Sigmoid colon (tissue), 7 donors: ENCODE measurements at regions of chr3 and their contacts with region 1.

Region 1: DNA sequence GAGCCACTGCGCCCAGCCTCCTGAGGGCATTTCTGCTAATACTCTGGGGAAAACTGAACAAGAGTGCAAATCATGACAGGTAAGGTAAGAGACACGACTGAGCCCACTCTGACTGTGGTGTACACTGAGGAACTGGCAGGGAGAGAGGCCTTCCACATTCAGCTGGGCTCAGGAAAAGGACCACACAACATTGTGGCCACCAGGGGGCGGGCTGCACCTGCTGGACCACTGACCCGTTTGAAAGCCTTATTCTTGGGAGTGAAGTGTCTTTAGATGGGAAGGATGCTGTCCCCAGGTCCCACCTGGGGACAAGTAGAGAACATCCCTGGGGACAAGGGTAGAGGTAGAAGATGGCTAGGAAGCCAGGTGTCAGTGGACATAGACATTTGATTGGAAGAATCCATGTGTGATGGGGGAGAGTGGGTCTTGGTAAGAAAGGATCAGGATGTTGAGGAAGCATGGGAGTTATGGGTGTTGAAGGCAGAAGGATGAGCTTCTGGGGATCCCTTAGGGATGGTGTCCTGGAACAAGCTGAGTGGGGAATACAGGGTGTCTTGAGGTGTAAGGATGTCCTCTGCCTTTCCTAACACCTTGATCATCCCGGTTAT is 6.2 kb upstream of the CTDSPL start:
- DNase-seq: peak; percentile 92
- H3K4me3 ChIP-seq: no peak overlapping the region
- H3K27ac ChIP-seq: peak overlapping the region in 1 of 4 donors; percentile 36
- H3K4me1 ChIP-seq: peaks cover 0 to 25% (median 15%) of the 10 kb centered on the region in 4 donors
- H3K27me3 ChIP-seq: no peaks in the 10 kb centered on the region
- CTCF ChIP-seq: peak; percentile 92 to 96 (median 94)
- EP300 ChIP-seq: no peak
- POLR2A ChIP-seq: no peak

Region 2: DNA sequence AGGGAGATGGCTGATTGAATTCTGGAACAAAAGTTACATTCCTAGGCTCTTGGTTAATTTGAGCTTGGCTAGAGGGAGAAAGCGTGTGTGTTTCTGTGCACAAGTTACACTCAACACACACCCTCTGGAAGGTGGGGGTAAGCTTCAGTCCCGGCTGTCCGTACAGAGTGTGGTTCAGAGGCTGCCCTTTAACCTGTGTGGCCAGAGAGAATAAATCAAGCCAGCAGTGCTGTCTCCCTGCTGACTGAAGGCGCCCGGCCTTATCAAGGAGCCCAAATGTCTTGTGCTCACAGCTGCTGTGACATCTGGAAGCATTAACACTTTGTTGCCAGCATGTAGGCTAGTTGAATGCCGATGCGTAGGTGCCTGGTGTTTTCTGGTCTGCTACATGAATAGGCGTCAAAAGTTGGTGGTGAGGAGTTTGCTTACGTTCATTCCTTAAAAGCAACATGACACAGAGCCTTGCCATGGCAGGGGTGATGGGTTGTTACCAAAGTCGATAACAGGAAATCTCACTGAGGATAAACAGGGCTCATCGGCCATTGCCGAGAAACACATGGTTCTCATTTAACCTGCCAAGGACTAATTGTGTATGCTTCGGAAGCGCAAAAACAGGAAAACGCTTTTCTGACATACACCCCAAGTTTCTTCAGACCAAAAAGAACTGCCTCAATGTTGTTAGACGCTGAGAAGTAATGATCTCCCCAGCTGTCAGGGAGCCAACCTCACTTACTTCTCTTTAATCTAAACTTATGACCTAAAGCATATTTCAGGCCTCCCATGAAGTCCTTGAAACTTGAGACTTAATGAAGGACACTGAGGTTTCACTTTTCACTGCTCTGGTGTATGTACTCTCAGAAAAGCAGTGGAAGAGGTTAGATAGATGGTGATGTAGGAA is 89.6 kb before region 1 on chr3:
- intact Hi-C with region 1: no loop called
- DNase-seq: peak; percentile 75
- H3K4me3 ChIP-seq: no peak overlapping the region
- H3K27ac ChIP-seq: peak overlapping the region; percentile 63 to 77 (median 68)
- H3K4me1 ChIP-seq: peaks cover 0 to 43% (median 36%) of the 10 kb centered on the region in 4 donors
- H3K27me3 ChIP-seq: no peaks in the 10 kb centered on the region
- CTCF ChIP-seq: no peak
- EP300 ChIP-seq: no peak
- POLR2A ChIP-seq: no peak

Region 3: DNA sequence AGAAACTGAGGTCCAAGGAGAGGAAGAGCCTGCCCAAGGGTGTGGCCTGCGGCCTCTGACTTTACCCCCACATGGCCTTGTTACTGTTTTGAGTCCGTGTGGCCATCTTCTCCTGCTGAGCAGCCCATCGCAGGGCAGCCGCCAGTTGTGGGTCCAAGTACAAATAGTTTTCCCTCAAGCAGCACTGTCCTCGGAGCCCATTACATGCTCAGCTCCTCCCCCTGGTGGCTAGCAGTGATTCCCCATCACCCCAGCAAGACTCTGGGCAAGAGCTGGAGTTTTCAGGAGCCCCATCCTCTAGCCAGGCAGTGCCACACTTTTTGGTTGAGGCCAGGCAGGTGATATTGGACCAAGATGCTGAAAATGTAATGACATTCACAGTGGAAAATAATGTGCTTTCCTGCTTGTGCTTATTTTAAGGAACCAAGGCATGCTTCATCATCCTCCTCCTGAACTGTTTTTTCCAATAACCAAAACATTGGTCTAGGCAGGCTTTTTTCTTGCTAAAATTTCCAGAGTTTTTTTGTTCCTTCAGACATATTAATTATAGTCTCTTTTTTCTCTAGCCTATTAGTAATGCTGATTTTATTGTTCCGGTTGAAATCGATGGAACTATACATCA is 111.9 kb after region 1 on chr3:
- intact Hi-C with region 1: loop called (anchors 1 kb)
- DNase-seq: peak; percentile 82
- H3K4me3 ChIP-seq: no peak overlapping the region
- H3K27ac ChIP-seq: no peak overlapping the region
- H3K4me1 ChIP-seq: peaks cover 0 to 20% (median 8%) of the 10 kb centered on the region in 4 donors
- H3K27me3 ChIP-seq: no peaks in the 10 kb centered on the region
- CTCF ChIP-seq: peak; percentile 73 to 83 (median 80)
- EP300 ChIP-seq: no peak
- POLR2A ChIP-seq: no peak

Region 4: GRCh38 chr3:38003371-38003816 is 147.9 kb after region 1 on chr3:
- intact Hi-C with region 1: loop called (anchors 2 kb)
- DNase-seq: peak; percentile 86
- H3K4me3 ChIP-seq: no peak overlapping the region
- H3K27ac ChIP-seq: peak overlapping the region in 1 of 4 donors; percentile 46
- H3K4me1 ChIP-seq: peaks cover 0 to 24% (median 10%) of the 10 kb centered on the region in 4 donors
- H3K27me3 ChIP-seq: no peaks in the 10 kb centered on the region
- CTCF ChIP-seq: peak; percentile 51 to 86 (median 70)
- EP300 ChIP-seq: no peak
- POLR2A ChIP-seq: no peak